GM12878 (cell line): ENCODE measurements at regions of chr14 and their contacts with region 1.

Region 1: GRCh38 chr14:58501214-58501816 is 73.8 kb downstream of the KIAA0586 start:
- DNase-seq: peak; percentile 30
- ATAC-seq: peak; percentile 91
- H3K4me3 ChIP-seq: no peak overlapping the region
- H3K27ac ChIP-seq: no peak overlapping the region
- H3K4me1 ChIP-seq: no peaks in the 10 kb centered on the region
- H3K27me3 ChIP-seq: no peaks in the 10 kb centered on the region
- CTCF ChIP-seq: peak; percentile 72 to 89 (median 75)
- EP300 ChIP-seq: no peak
- POLR2A ChIP-seq: no peak
- RAD21 ChIP-seq: peak; percentile 96

Region 2: GRCh38 chr14:58297762-58298476 is 203.4 kb before region 1 on chr14:
- CTCF ChIA-PET with region 1: no interaction called
- POLR2A ChIA-PET with region 1: no interaction called
- RAD21 ChIA-PET with region 1: no interaction called
- SMC1A ChIA-PET with region 1: no interaction called
- in situ Hi-C with region 1: no loop called
- intact Hi-C with region 1: no loop called
- DNase-seq: peak; percentile 100
- ATAC-seq: peak; percentile 90
- H3K4me3 ChIP-seq: peak overlapping the region; percentile 92
- H3K27ac ChIP-seq: peak overlapping the region; percentile 97
- H3K4me1 ChIP-seq: 0 out of 2 replicates have a peak, but pooled peaks cover 3% of the 10 kb centered on the region
- H3K27me3 ChIP-seq: no peaks in the 10 kb centered on the region
- CTCF ChIP-seq: peak in 1 of 3 experiments; percentile 8; a peak in 1 of 6 replicates
- EP300 ChIP-seq: no peak
- POLR2A ChIP-seq: peak; percentile 85
- RAD21 ChIP-seq: no peak

Region 3: GRCh38 chr14:58513272-58513671 is 12.0 kb after region 1 on chr14:
- CTCF ChIA-PET with region 1: interaction called, 16 read pairs
- POLR2A ChIA-PET with region 1: no interaction called
- RAD21 ChIA-PET with region 1: interaction called, 4 read pairs
- SMC1A ChIA-PET with region 1: interaction called, 9 read pairs
- in situ Hi-C with region 1: no loop called
- intact Hi-C with region 1: no loop called
- DNase-seq: no peak
- ATAC-seq: no peak
- H3K4me3 ChIP-seq: no peak overlapping the region
- H3K27ac ChIP-seq: no peak overlapping the region
- H3K4me1 ChIP-seq: no peaks in the 10 kb centered on the region
- H3K27me3 ChIP-seq: no peaks in the 10 kb centered on the region
- CTCF ChIP-seq: no peak
- EP300 ChIP-seq: no peak
- POLR2A ChIP-seq: no peak
- RAD21 ChIP-seq: no peak

Region 4: GRCh38 chr14:58826845-58827686 is 325.8 kb after region 1 on chr14:
- CTCF ChIA-PET with region 1: interaction called, 11 read pairs
- POLR2A ChIA-PET with region 1: no interaction called
- RAD21 ChIA-PET with region 1: interaction called, 3 read pairs
- SMC1A ChIA-PET with region 1: interaction called, 4 read pairs
- in situ Hi-C with region 1: no loop called
- intact Hi-C with region 1: no loop called
- DNase-seq: no peak
- ATAC-seq: no peak
- H3K4me3 ChIP-seq: no peak overlapping the region
- H3K27ac ChIP-seq: no peak overlapping the region
- H3K4me1 ChIP-seq: no peaks in the 10 kb centered on the region
- H3K27me3 ChIP-seq: no peaks in the 10 kb centered on the region
- CTCF ChIP-seq: 0 out of 6 replicates have a peak, but pooled peaks of 1 of the 3 experiments have one; percentile 11
- EP300 ChIP-seq: no peak
- POLR2A ChIP-seq: no peak
- RAD21 ChIP-seq: no peak

Region 5: DNA sequence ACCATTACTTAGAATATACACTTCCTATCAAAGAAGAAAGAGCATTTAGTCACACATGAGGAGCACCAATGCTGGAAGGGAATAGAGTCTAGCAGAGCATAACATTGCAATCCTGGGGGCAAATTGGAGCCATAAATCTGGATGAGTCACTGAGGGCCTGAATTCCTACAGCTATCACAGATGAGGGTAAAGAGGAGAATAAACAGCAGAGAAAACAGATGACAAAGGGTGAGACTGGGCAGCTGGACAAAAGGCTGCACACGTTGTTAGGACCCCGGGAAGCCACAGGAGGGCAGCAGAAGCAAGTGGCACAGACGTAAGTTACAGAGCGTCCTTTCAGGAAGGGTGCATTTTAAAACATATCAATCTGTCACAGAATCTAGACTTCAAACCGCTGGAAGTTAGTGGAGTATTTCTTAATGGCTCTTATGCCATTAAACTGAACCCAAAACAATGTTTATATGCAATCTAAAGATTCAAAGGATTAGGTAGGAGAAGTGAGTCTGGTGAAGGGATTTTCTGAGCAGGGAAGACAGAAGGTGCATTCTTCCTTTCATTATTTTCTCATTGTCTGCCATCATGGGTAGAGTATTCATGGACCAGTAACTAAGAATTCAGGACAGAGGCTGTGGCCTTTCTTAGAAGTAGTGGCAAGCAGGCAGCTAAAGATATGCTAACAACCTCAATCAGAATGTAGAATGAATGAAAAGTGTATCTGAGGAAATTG is 527.3 kb after region 1 on chr14:
- CTCF ChIA-PET with region 1: interaction called, 25 read pairs
- POLR2A ChIA-PET with region 1: no interaction called
- RAD21 ChIA-PET with region 1: interaction called, 7 read pairs
- SMC1A ChIA-PET with region 1: interaction called, 15 read pairs
- in situ Hi-C with region 1: loop called (anchors 10 kb)
- intact Hi-C with region 1: loop called (anchors 1 kb)
- DNase-seq: peak; percentile 31
- ATAC-seq: peak; percentile 100
- H3K4me3 ChIP-seq: no peak overlapping the region
- H3K27ac ChIP-seq: no peak overlapping the region
- H3K4me1 ChIP-seq: no peaks in the 10 kb centered on the region
- H3K27me3 ChIP-seq: no peaks in the 10 kb centered on the region
- CTCF ChIP-seq: peak; percentile 88 to 94 (median 91)
- EP300 ChIP-seq: no peak
- POLR2A ChIP-seq: no peak
- RAD21 ChIP-seq: peak; percentile 85

Region 6: DNA sequence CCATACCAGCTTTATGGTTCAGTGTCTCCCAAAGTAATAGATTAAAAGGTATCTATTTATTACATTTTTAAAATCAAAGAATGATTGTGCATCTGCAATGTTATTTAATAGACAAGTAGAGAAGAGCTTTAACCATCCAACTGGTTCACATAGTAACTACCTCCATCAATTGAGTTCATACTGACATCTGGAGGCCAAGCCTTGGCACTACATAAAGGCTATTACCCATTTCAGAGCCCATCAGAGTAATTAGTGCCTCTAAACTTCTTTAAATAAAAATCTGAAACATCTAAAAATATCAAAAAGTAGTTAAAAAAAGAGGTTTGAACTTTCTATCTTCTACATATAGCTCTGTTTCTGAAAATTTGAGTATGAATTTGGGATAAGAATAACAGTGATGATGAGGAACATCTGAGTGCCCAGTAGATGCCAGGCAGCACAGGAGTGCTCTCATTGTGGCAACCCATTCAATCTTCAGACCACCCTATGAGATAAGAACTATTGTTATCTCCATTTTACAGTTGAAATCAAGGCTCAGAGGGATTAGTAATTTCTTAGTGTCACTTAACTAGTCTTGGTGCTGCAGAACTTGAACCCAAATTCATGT is 554.2 kb after region 1 on chr14:
- CTCF ChIA-PET with region 1: interaction called, 57 read pairs
- POLR2A ChIA-PET with region 1: no interaction called
- RAD21 ChIA-PET with region 1: interaction called, 46 read pairs
- SMC1A ChIA-PET with region 1: interaction called, 27 read pairs
- in situ Hi-C with region 1: loop called (anchors 5 kb)
- intact Hi-C with region 1: loop called (anchors 1 kb)
- DNase-seq: peak; percentile 7
- ATAC-seq: peak; percentile 97
- H3K4me3 ChIP-seq: no peak overlapping the region
- H3K27ac ChIP-seq: no peak overlapping the region
- H3K4me1 ChIP-seq: no peaks in the 10 kb centered on the region
- H3K27me3 ChIP-seq: no peaks in the 10 kb centered on the region
- CTCF ChIP-seq: peak; percentile 67 to 85 (median 74)
- EP300 ChIP-seq: no peak
- POLR2A ChIP-seq: no peak
- RAD21 ChIP-seq: peak; percentile 90

Region 7: GRCh38 chr14:59454131-59454530 is 952.8 kb after region 1 on chr14:
- CTCF ChIA-PET with region 1: no interaction called
- POLR2A ChIA-PET with region 1: no interaction called
- RAD21 ChIA-PET with region 1: no interaction called
- SMC1A ChIA-PET with region 1: no interaction called
- in situ Hi-C with region 1: loop called (anchors 10 kb)
- intact Hi-C with region 1: loop called (anchors 10 kb)
- DNase-seq: no peak
- ATAC-seq: no peak
- H3K4me3 ChIP-seq: no peak overlapping the region
- H3K27ac ChIP-seq: no peak overlapping the region
- H3K4me1 ChIP-seq: no peaks in the 10 kb centered on the region
- H3K27me3 ChIP-seq: no peaks in the 10 kb centered on the region
- CTCF ChIP-seq: no peak
- EP300 ChIP-seq: no peak
- POLR2A ChIP-seq: no peak
- RAD21 ChIP-seq: no peak